T-cell (primary cell): ENCODE measurements at regions of chr21 and their contacts with region 1.

Region 1: DNA sequence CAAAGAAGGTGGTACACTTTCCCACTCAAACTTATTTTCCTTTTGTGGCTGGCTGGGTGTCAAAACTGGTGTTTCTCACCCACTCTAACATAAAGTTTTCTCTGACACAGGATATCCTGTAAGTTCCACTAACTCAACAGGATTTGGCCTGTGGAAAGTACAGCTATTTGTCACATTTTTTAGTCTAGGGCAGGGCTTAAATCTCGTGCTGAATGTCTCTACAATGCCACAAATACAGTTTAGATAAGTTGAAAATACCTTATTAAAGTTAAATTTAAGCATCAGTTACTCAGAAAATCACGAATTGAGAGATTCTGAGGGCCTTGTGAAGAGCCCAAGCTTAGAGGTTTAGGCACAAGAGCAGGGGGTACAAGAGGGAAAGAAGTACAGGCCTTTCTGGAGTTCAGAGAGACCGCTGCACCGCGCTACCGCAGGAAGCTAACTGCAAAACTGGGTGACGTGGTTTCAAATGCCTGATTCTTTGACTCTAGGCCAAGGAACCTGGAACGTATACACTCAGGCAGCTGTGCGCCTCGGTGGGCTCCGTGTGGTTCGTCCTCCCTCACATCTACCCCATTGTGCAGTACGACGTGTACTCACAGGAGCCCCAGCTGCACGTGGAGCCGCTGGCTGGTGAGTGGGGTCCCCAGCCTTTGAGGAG is 23.4 kb upstream of the PWP2 start:
- DNase-seq: peak; percentile 44 to 89 (median 76)
- ATAC-seq: peak; percentile 83 to 90 (median 86)
- H3K4me3 ChIP-seq: peak overlapping the region in 1 of 2 donors; percentile 38
- H3K4me3 Mint-ChIP-seq: peak overlapping the region; percentile 57 to 86 (median 71)
- H3K27ac ChIP-seq: peak overlapping the region; percentile 79
- H3K27ac Mint-ChIP-seq: peak overlapping the region; percentile 95 to 97
- H3K4me1 ChIP-seq: peaks cover 59 to 96% of the 10 kb centered on the region in 2 experiments
- H3K4me1 Mint-ChIP-seq: peaks cover 91 to 94% (median 93%) of the 10 kb centered on the region in 3 donors
- H3K27me3 ChIP-seq: no peaks in the 10 kb centered on the region
- H3K27me3 Mint-ChIP-seq: no peaks in the 10 kb centered on the region

Region 2: GRCh38 chr21:42939582-42940410 is 1144.0 kb before region 1 on chr21:
- CTCF ChIA-PET with region 1: no interaction called
- POLR2A ChIA-PET with region 1: no interaction called
- DNase-seq: no peak
- ATAC-seq: no peak
- H3K4me3 ChIP-seq: no peak overlapping the region
- H3K4me3 Mint-ChIP-seq: no peak overlapping the region
- H3K27ac ChIP-seq: no peak overlapping the region
- H3K27ac Mint-ChIP-seq: no peak overlapping the region
- H3K4me1 ChIP-seq: no peaks in the 10 kb centered on the region
- H3K4me1 Mint-ChIP-seq: peaks cover 0 to 2% (median 0%) of the 10 kb centered on the region in 3 donors
- H3K27me3 ChIP-seq: no peaks in the 10 kb centered on the region
- H3K27me3 Mint-ChIP-seq: no peaks in the 10 kb centered on the region

Region 3: DNA sequence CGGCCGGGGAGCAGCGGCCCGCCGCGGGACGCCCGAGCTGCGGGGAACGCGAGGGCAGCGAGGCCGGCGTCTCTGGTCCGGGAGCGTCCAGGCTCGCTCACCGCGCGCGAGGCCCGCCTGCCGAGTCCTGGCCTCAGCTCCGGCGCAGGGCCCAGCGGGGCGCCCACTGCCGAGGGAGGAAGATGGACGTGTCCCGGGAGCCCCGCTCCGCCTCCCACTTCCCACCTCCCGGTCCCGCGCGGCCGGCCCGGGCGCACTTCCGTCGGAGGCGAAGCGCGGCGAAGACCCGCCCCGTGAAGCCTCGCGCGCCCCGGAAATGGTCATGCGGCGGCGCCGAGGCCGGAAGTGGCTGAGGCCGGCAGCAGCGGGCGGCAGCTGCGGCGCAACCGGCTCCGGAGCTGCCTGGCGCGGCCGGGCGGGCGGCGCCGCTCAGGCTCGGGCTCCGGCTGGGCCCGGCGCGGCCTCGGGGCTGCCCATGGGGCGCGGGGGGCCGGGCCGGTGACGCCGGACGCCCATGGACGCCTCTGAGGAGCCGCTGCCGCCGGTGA is 71.7 kb before region 1 on chr21 and contains the start of gene TRAPPC10:
- CTCF ChIA-PET with region 1: no interaction called
- POLR2A ChIA-PET with region 1: interaction called in 1 of 2 experiments, 10 read pairs
- DNase-seq: peak; percentile 29 to 88 (median 64)
- ATAC-seq: peak; percentile 72 to 79 (median 77)
- H3K4me3 ChIP-seq: peak within 1 kb of the TSS; percentile 74 to 91
- H3K4me3 Mint-ChIP-seq: peak within 1 kb of the TSS; percentile 92 to 96 (median 92)
- H3K27ac ChIP-seq: peak within 1 kb of the TSS; percentile 81
- H3K27ac Mint-ChIP-seq: peak within 1 kb of the TSS; percentile 94 to 96
- H3K4me1 ChIP-seq: peaks cover 10 to 34% of the 10 kb centered on the region in 2 experiments
- H3K4me1 Mint-ChIP-seq: peaks cover 46 to 54% (median 49%) of the 10 kb centered on the region in 3 donors
- H3K27me3 ChIP-seq: no peaks in the 10 kb centered on the region
- H3K27me3 Mint-ChIP-seq: no peaks in the 10 kb centered on the region
- total RNA-seq, gene TRAPPC10: 82.5 to 144 (median 92.2) TPM

Region 4: GRCh38 chr21:44065428-44065827 is 18.3 kb before region 1 on chr21:
- CTCF ChIA-PET with region 1: interaction called, 4 to 22 read pairs
- POLR2A ChIA-PET with region 1: no interaction called
- DNase-seq: peak; percentile 41 to 96 (median 88)
- ATAC-seq: peak; percentile 94 to 100 (median 100)
- H3K4me3 ChIP-seq: no peak overlapping the region
- H3K4me3 Mint-ChIP-seq: peak overlapping the region; percentile 53 to 74 (median 62)
- H3K27ac ChIP-seq: peak overlapping the region; percentile 92
- H3K27ac Mint-ChIP-seq: peak overlapping the region; percentile 93 to 96
- H3K4me1 ChIP-seq: peaks cover 8 to 33% of the 10 kb centered on the region in 2 experiments
- H3K4me1 Mint-ChIP-seq: peaks cover 33 to 55% (median 47%) of the 10 kb centered on the region in 3 donors
- H3K27me3 ChIP-seq: no peaks in the 10 kb centered on the region
- H3K27me3 Mint-ChIP-seq: no peaks in the 10 kb centered on the region